ENCODE measurements at regions of chr9 and their contacts with region 1.

Region 1: GRCh38 chr9:111597817-111598729 is 1.4 kb downstream of the PTGR1 start:
- DNase-seq: peak; percentile 78
- H3K4me3 ChIP-seq: peak overlapping the region; percentile 66
- H3K27ac ChIP-seq: no peak overlapping the region
- H3K4me1 ChIP-seq: no peaks in the 10 kb centered on the region
- H3K27me3 ChIP-seq: no peaks in the 10 kb centered on the region
- CTCF ChIP-seq: peak; percentile 92

Region 2: GRCh38 chr9:111631071-111631971 is 33.2 kb after region 1 on chr9 and contains the start of gene DNAJC25:
- CTCF ChIA-PET with region 1: no interaction called
- POLR2A ChIA-PET with region 1: no interaction called
- intact Hi-C with region 1: loop called (anchors 2 kb)
- DNase-seq: peak; percentile 99
- H3K4me3 ChIP-seq: peak within 1 kb of the TSS; percentile 80
- H3K27ac ChIP-seq: peak within 1 kb of the TSS; percentile 89
- H3K4me1 ChIP-seq: peaks cover 18% of the 10 kb centered on the region
- H3K27me3 ChIP-seq: no peaks in the 10 kb centered on the region
- CTCF ChIP-seq: no peak
- total RNA-seq, gene DNAJC25: 6.1 and 6.3 TPM in 2 replicates

Region 3: DNA sequence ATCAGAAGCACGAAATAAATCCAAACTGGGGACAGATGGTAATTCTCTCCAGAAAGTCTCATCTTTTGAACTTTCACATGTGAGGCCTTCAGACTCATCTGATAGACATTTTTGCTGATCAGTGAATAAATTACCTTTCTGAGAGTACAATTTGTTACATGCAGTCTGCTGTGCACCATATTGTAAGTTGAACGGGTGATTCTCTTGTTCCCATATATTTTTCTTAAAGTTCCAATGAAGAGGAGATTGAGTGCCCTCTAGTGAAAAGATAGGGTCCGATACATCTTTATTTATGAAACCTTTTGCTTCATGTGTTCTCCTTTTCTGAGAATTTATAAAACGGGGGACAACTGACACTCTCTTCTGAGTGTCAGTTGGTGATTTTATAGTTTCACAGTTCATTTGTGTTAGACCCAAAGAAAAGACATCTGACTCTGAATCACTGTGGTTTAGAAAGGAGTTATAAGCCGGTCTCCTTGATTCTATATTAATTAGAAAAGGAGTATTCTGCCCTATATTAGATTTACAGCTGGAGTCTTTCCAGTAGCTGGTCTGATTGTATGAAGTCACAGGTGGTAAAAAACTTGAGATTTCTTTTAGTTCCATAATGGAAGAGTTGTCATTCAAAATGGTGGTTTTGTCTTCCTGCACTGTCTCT is 93.7 kb after region 1 on chr9:
- CTCF ChIA-PET with region 1: interaction called, 3 read pairs
- POLR2A ChIA-PET with region 1: interaction called, 4 read pairs
- intact Hi-C with region 1: loop called (anchors 2 kb)
- DNase-seq: peak; percentile 73
- H3K4me3 ChIP-seq: no peak overlapping the region
- H3K27ac ChIP-seq: no peak overlapping the region
- H3K4me1 ChIP-seq: no peaks in the 10 kb centered on the region
- H3K27me3 ChIP-seq: no peaks in the 10 kb centered on the region
- CTCF ChIP-seq: peak; percentile 64

Region 4: DNA sequence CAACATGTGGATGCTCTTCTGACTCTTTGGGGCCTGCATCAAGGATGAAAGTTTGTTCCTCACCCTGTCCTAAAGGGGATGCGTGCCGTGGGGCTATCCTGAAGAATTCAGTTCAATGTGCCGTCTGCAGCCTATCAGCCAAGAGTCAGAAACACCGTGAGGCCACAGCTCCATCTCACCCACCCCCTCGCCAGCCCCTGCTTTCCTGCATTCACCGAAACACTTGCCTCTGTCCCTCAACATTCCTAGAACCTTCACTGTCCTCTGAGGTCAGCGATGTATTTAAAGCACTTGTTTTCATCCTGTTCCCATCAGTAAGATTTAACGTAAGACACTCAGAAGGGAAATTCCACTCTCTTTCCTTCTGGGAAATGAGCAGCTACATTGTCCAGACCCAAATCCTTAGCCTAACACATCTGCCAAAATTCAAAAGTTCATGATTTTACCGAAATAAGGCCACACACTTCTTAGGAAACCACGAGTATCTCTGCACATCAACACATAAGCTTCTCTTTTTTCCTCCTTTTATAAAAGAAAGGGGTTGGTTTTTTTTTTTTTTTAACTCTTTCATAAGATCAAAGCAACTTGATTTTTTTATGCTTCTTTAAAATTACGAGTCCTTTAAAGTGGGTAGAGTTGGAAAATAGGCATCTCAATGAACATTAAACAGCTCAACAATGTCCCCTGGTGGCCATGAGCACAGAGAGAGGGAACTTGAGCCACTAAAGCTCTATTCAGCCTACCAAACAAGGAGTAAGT is 476.4 kb after region 1 on chr9:
- CTCF ChIA-PET with region 1: interaction called, 5 read pairs
- POLR2A ChIA-PET with region 1: no interaction called
- intact Hi-C with region 1: loop called (anchors 10 kb)
- DNase-seq: peak; percentile 78
- H3K4me3 ChIP-seq: no peak overlapping the region
- H3K27ac ChIP-seq: no peak overlapping the region
- H3K4me1 ChIP-seq: no peaks in the 10 kb centered on the region
- H3K27me3 ChIP-seq: no peaks in the 10 kb centered on the region
- CTCF ChIP-seq: peak; percentile 96

Measured in A673 (cell line).